PC-3 (cell line): ENCODE measurements at regions of chr3 and their contacts with region 1.

Region 1: GRCh38 chr3:21752749-21753347 is 1.8 kb upstream of the ZNF385D start:
- DNase-seq: peak; percentile 77
- ATAC-seq: peak; percentile 29
- H3K4me3 ChIP-seq: no peak overlapping the region; the same call in 1 of the 2 replicates
- H3K27ac ChIP-seq: peak overlapping the region; percentile 65; the same call in 1 of the 2 replicates
- H3K4me1 ChIP-seq: peaks cover 33% of the 10 kb centered on the region
- H3K27me3 ChIP-seq: no peaks in the 10 kb centered on the region
- CTCF ChIP-seq: peak; percentile 90

Region 2: DNA sequence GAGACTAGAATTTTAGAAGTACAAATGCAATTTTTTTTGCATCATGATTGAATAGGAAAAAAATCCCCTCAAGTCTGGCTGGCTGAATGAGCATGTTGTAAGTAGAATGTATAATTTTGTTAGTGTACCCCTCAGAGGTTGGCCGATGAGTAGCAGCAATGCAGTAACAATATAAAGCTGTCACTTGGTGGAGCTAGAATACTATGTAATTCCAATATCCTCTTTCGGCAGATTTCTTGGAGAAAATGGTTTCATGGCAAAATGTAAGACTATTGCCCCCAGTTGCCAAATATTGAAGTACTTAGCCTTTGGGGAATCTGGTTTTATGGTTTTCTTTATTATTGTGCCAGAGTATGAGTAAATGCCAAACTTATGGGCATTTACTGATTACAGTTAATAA is 1527.1 kb before region 1 on chr3:
- CTCF ChIA-PET with region 1: no interaction called
- POLR2A ChIA-PET with region 1: no interaction called
- intact Hi-C with region 1: loop called (anchors 10 kb)
- DNase-seq: peak; percentile 61
- ATAC-seq: peak; percentile 85
- H3K4me3 ChIP-seq: no peak overlapping the region
- H3K27ac ChIP-seq: no peak overlapping the region
- H3K4me1 ChIP-seq: no peaks in the 10 kb centered on the region
- H3K27me3 ChIP-seq: 0 out of 2 replicates have a peak, but pooled peaks cover 4% of the 10 kb centered on the region
- CTCF ChIP-seq: peak; percentile 70

Region 3: GRCh38 chr3:21271606-21272016 is 481.2 kb before region 1 on chr3:
- CTCF ChIA-PET with region 1: no interaction called
- POLR2A ChIA-PET with region 1: no interaction called
- intact Hi-C with region 1: no loop called
- DNase-seq: no peak
- ATAC-seq: no peak
- H3K4me3 ChIP-seq: no peak overlapping the region
- H3K27ac ChIP-seq: no peak overlapping the region
- H3K4me1 ChIP-seq: peaks cover 6% of the 10 kb centered on the region; the same call in 1 of the 2 replicates
- H3K27me3 ChIP-seq: no peaks in the 10 kb centered on the region
- CTCF ChIP-seq: no peak

Region 4: DNA sequence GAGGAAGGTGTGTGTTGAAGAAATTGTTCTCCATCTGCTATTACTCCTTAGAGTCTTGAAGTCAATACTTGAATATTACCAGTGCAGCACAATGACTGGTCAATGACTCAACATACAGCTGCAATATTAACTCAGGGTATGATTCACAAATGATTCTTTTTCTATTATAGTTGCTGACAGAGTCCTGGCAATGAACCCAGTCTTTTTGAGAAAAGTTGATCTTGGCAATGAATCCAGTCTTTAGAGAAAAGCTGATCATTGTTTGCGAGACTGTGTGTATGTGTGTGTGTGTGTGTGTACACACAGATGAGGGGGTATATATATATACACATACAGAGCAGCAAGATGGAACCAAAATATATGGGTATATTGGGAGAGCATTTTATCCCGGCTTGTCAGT is 317.0 kb before region 1 on chr3:
- CTCF ChIA-PET with region 1: interaction called, 4 read pairs
- POLR2A ChIA-PET with region 1: no interaction called
- intact Hi-C with region 1: loop called (anchors 2 kb)
- DNase-seq: peak; percentile 99
- ATAC-seq: peak; percentile 98
- H3K4me3 ChIP-seq: no peak overlapping the region
- H3K27ac ChIP-seq: peak overlapping the region; percentile 43
- H3K4me1 ChIP-seq: peaks cover 13% of the 10 kb centered on the region
- H3K27me3 ChIP-seq: no peaks in the 10 kb centered on the region
- CTCF ChIP-seq: no peak

Region 5: DNA sequence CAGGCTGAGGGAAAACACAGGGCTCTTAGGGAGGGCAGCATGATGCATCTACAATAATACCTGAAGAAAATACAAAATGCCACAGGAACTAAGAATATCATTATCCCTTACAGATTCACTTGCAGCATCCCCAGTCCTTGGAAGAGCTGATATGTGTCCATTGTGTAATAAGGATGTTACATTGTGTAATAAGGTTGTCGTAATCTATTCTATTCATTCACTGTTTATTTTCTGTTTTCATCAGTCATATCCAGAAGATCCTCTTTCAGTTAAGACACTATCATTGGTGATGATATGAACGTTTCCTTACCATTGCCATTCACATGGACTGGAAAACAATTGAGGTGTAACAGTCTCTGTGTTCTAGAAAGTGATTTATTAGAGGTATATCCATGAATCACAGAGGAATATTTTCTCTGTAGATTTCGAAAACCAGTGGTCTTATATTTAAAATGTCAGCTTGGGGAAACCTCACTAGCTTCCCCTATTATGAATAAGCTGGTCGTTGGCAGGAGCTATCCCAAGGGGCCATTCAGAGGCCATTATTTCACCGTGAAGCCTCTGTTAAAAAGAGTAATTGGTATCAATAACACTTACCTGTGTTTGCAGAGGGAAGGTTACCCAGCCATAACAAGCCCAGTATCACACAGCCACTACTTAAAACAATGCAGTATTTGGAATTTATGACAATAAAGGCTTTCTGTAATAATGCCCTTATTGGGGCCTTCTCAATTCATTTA is 242.9 kb before region 1 on chr3:
- CTCF ChIA-PET with region 1: no interaction called
- POLR2A ChIA-PET with region 1: interaction called, 31 read pairs
- intact Hi-C with region 1: no loop called
- DNase-seq: no peak
- ATAC-seq: no peak
- H3K4me3 ChIP-seq: no peak overlapping the region
- H3K27ac ChIP-seq: no peak overlapping the region
- H3K4me1 ChIP-seq: no peaks in the 10 kb centered on the region
- H3K27me3 ChIP-seq: no peaks in the 10 kb centered on the region
- CTCF ChIP-seq: no peak

Region 6: GRCh38 chr3:21642433-21642832 is 110.4 kb before region 1 on chr3:
- CTCF ChIA-PET with region 1: no interaction called
- POLR2A ChIA-PET with region 1: no interaction called
- intact Hi-C with region 1: loop called (anchors 1 kb)
- DNase-seq: peak; percentile 69
- ATAC-seq: peak; percentile 88
- H3K4me3 ChIP-seq: no peak overlapping the region
- H3K27ac ChIP-seq: peak overlapping the region; percentile 70
- H3K4me1 ChIP-seq: peaks cover 18% of the 10 kb centered on the region
- H3K27me3 ChIP-seq: no peaks in the 10 kb centered on the region
- CTCF ChIP-seq: no peak

Region 7: GRCh38 chr3:21705769-21706168 is 47.1 kb before region 1 on chr3:
- CTCF ChIA-PET with region 1: no interaction called
- POLR2A ChIA-PET with region 1: interaction called, 17 read pairs
- intact Hi-C with region 1: loop called (anchors 2 kb)
- DNase-seq: peak; percentile 97
- ATAC-seq: peak; percentile 98
- H3K4me3 ChIP-seq: no peak overlapping the region
- H3K27ac ChIP-seq: peak overlapping the region; percentile 92
- H3K4me1 ChIP-seq: peaks cover 24% of the 10 kb centered on the region
- H3K27me3 ChIP-seq: no peaks in the 10 kb centered on the region
- CTCF ChIP-seq: no peak

Region 8: GRCh38 chr3:22089284-22089683 is 336.4 kb after region 1 on chr3:
- CTCF ChIA-PET with region 1: no interaction called
- POLR2A ChIA-PET with region 1: no interaction called
- intact Hi-C with region 1: loop called (anchors 5 kb)
- DNase-seq: peak; percentile 80
- ATAC-seq: peak; percentile 90
- H3K4me3 ChIP-seq: no peak overlapping the region
- H3K27ac ChIP-seq: no peak overlapping the region
- H3K4me1 ChIP-seq: 0 out of 2 replicates have a peak, but pooled peaks cover 4% of the 10 kb centered on the region
- H3K27me3 ChIP-seq: no peaks in the 10 kb centered on the region
- CTCF ChIP-seq: peak; percentile 90